Heart right ventricle (tissue), 16 donors: ENCODE measurements at regions of chr13 and their contacts with region 1.

Region 1: DNA sequence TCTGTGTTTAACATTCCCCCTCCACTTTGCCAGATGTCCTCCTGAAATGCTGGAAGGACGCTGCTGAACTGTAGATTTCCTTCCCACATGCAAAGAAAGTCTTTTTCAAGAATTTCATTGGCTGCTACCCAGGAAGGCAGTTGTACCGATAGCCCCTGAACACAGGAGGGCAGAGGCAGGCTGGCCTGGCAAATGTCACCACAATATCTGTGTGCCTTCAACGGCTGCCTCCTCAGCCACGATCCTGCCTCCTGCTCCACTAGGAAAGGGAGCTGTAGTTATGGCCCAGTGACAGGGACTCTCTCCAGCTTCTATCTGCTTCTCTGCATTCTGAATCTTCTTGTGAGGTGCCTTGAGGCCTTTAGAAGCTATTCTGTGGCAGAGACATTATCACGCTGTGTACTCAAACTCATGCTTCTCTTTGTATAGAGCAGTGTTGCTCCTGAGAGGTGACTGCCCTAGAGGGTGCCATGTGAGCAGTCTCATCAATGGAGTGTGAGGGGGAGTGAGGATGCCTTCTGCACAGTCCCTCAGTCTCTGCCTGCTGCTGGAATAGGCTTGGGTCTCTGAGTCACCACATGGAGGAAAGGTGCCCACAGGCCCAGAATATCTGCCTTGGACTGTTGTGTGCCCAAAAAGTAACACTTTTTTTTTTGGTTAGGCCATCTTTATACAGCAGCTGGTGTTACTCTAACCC is 279.8 kb downstream of the DNAJC15 start:
- DNase-seq: peak; percentile 57 to 63
- ATAC-seq: peak; percentile 77 to 92 (median 86)
- H3K4me3 ChIP-seq: no peak overlapping the region
- H3K27ac ChIP-seq: peak overlapping the region in 4 of 10 donors; percentile 17 to 56 (median 48)
- H3K4me1 ChIP-seq: peaks cover 0 to 34% (median 18%) of the 10 kb centered on the region in 9 donors
- H3K27me3 ChIP-seq: no peaks in the 10 kb centered on the region
- CTCF ChIP-seq: peak; percentile 31 to 76 (median 59)

Region 2: GRCh38 chr13:43285933-43286597 is 17.1 kb before region 1 on chr13:
- intact Hi-C with region 1: no loop called
- DNase-seq: no peak
- ATAC-seq: peak; percentile 30 to 76 (median 44)
- H3K4me3 ChIP-seq: no peak overlapping the region
- H3K27ac ChIP-seq: peak overlapping the region in 1 of 10 donors; percentile 5
- H3K4me1 ChIP-seq: peaks cover 0 to 31% (median 20%) of the 10 kb centered on the region in 9 donors
- H3K27me3 ChIP-seq: no peaks in the 10 kb centered on the region
- CTCF ChIP-seq: no peak

Region 3: DNA sequence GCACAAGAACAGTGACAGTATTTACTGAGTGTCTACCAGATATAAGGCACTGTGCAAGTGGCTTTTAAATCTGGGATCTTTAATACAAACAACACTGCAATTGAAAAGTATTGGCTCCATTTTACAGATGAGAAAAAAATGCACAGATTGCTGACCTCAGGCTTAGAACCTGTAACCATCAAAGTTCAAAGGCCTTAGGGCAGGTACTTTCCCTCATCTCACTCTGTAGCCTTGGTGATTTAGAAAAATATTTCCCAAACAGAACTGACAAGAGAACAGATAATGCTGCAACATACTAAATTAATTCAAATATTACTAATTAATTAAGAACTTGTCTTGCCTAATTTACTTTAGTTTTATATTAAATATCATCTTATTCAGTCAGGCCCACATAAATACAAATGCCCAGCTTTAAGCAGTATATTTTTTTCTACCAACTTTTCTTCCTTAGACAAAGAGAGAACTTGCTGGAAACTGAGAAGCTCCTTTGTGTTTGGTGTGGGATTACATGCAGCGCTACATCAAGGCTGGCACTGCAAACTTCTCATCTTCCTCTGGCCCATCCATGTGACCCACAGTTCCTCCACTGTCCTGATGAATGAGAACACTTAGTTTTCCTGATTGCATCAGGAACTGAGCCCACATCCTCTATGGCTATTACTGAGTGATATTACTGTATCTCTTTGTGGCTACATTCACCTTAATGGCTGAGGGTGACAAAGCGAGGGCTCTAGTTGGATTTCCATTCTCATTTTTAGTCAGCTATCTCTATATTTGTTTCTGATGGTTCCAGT is 181.4 kb after region 1 on chr13:
- intact Hi-C with region 1: loop called in 1 of 10 experiments (anchors 10 kb)
- DNase-seq: no peak
- ATAC-seq: peak in 4 of 8 donors; percentile 29 to 57 (median 43)
- H3K4me3 ChIP-seq: no peak overlapping the region
- H3K27ac ChIP-seq: no peak overlapping the region
- H3K4me1 ChIP-seq: peaks cover 0 to 16% (median 0%) of the 10 kb centered on the region in 9 donors
- H3K27me3 ChIP-seq: no peaks in the 10 kb centered on the region
- CTCF ChIP-seq: no peak

Region 4: GRCh38 chr13:43528992-43529391 is 225.8 kb after region 1 on chr13:
- intact Hi-C with region 1: no loop called
- DNase-seq: no peak
- ATAC-seq: no peak
- H3K4me3 ChIP-seq: no peak overlapping the region
- H3K27ac ChIP-seq: no peak overlapping the region
- H3K4me1 ChIP-seq: no peaks in the 10 kb centered on the region
- H3K27me3 ChIP-seq: no peaks in the 10 kb centered on the region
- CTCF ChIP-seq: no peak

Region 5: DNA sequence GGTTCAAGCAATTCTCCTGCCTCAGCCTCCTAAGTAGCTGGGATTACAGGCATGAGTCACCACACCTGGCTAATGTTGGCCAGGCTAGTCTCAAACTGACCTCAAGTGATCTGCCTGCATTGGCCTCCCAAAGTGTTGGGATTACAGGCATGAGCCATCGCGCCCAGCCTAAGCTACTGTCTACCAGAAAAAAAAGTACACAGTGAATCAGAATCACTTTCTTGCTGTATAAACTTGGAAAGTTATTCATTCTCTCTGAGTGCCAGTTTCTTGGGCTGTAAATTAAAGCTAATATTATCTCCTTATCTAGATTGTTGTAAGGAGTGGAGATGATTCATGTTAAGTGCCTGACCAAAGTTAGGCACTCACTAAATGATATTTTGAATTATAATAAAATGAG is 240.8 kb after region 1 on chr13:
- intact Hi-C with region 1: no loop called
- DNase-seq: no peak
- ATAC-seq: no peak
- H3K4me3 ChIP-seq: no peak overlapping the region
- H3K27ac ChIP-seq: no peak overlapping the region
- H3K4me1 ChIP-seq: peaks cover 0 to 40% (median 31%) of the 10 kb centered on the region in 9 donors
- H3K27me3 ChIP-seq: no peaks in the 10 kb centered on the region
- CTCF ChIP-seq: no peak

Region 6: GRCh38 chr13:43767341-43767931 is 464.3 kb after region 1 on chr13:
- intact Hi-C with region 1: no loop called
- DNase-seq: peak; percentile 21 to 34
- ATAC-seq: peak; percentile 80 to 92 (median 90)
- H3K4me3 ChIP-seq: peak overlapping the region in 1 of 10 donors; percentile 3
- H3K27ac ChIP-seq: peak overlapping the region; percentile 4 to 86 (median 73)
- H3K4me1 ChIP-seq: peaks cover 0 to 50% (median 24%) of the 10 kb centered on the region in 9 donors
- H3K27me3 ChIP-seq: no peaks in the 10 kb centered on the region
- CTCF ChIP-seq: no peak

Region 7: GRCh38 chr13:43878892-43879754 is 575.9 kb after region 1 on chr13 and contains the start of gene CCDC122:
- intact Hi-C with region 1: loop called in 1 of 10 experiments (anchors 10 kb)
- DNase-seq: peak; percentile 79 to 87
- ATAC-seq: peak; percentile 86 to 94 (median 92)
- H3K4me3 ChIP-seq: peak within 1 kb of the TSS; percentile 41 to 94 (median 87)
- H3K27ac ChIP-seq: peak within 1 kb of the TSS; percentile 85 to 99 (median 95)
- H3K4me1 ChIP-seq: peaks cover 0 to 46% (median 15%) of the 10 kb centered on the region in 9 donors
- H3K27me3 ChIP-seq: no peaks in the 10 kb centered on the region
- CTCF ChIP-seq: no peak
- total RNA-seq, gene CCDC122: 2.4 to 16.0 (median 7.3) TPM